Activated CD8-positive, alpha-beta T cell treated with anti-CD3 and anti-CD28 coated beads, Interleukin-2, amount 10 ng/mL, durations not matched to agents 7 days and 5 days (primary cell): ENCODE measurements at regions of chr17 and their contacts with region 1.

Region 1: DNA sequence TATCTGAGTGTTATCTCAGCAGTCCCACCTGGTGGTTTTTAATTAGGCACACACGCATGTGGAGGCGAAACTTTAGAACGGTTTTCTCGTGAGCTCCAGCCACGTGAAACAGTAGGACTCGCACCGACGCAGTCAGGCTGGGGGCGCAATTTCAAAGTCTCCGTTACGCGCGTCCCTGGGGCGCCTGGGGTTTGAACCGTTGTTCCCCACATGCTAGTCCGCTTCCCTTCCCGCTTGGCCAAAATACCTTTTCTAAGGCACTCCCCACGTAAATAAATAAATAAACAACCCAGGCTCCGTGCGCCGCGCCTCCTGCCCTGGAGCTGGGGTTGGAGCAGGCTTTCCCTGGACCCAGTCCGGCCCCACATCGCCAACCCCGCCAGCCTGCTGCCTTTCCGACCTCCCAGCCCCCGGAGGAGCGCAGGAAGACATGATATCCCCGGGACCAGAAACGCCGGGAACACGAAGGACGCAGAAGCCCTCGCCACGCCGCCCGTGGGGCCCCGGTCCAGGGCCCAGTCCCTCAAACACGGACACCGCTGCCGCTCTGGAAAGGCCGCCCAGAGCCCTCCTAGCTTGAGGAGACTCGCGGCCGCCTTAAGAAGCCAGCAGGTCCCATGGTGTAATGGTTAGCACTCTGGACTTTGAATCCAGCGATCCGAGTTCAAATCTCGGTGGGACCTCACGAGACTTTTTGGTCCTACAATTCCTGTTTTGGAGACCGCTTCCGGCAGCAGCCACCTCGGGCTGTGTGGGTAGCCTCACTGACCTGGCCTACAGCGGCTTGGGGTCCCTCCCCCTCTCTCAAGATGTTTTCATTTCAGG is 18.2 kb downstream of the GNGT2 start:
- DNase-seq: peak; percentile 92
- ATAC-seq: peak; percentile 62
- H3K4me3 Mint-ChIP-seq: peak overlapping the region; percentile 83
- H3K27ac Mint-ChIP-seq: peak overlapping the region; percentile 94
- H3K4me1 Mint-ChIP-seq: peaks cover 55% of the 10 kb centered on the region
- H3K27me3 Mint-ChIP-seq: no peaks in the 10 kb centered on the region

Region 2: DNA sequence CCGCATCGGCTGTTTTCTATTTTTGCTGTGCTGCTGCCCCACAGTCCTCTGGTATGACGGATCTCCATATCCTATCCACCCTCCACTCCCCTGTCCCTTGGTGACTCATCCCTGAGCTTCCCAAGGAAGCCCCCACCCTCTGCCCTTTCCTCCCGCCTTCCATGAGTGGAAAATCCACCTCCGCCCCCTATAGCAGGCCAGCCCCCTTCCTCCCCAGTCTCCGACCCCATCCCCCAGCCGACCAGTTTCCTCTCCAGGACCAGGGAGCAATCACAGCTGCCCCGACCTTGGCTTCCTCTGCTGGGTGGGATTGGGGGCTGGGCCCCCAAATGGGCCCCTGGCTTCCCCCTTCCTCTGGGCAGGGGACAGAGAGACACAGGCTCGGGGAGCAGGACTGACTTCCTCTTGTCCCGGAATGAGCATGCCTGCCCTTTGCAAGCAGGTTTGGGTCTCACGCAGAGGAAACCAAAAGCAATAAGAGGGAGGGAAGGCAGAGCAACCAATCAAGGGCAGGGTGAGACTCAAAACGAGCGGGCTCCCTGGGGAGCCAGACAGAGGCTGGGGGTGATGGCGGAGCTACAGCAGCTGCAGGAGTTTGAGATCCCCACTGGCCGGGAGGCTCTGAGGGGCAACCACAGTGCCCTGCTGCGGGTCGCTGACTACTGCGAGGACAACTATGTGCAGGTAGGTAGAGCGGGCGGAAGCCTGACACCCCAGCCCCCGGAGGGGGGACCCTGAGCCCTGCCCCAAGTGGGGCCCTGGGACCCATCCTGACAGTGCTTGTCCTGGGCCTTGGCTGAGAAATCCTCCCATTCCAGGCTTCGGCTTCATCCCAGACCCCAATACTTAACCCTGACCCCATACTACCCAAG is 18.3 kb after region 1 on chr17 and contains the starts of genes ABI3 and GNGT2:
- CTCF ChIA-PET with region 1: interaction called, 30 read pairs
- POLR2A ChIA-PET with region 1: interaction called, 69 read pairs
- DNase-seq: peak; percentile 84
- ATAC-seq: peak; percentile 83
- H3K4me3 Mint-ChIP-seq: peak within 1 kb of the TSS; percentile 96
- H3K27ac Mint-ChIP-seq: peak within 1 kb of the TSS; percentile 89
- H3K4me1 Mint-ChIP-seq: peaks cover 62% of the 10 kb centered on the region
- H3K27me3 Mint-ChIP-seq: no peaks in the 10 kb centered on the region
- total RNA-seq, gene ABI3: 110 to 117 TPM
- total RNA-seq, gene GNGT2: 40.0 to 45.4 TPM

Region 3: GRCh38 chr17:49217651-49218413 is 25.7 kb after region 1 on chr17:
- CTCF ChIA-PET with region 1: interaction called, 30 read pairs
- POLR2A ChIA-PET with region 1: interaction called, 69 read pairs
- DNase-seq: peak; percentile 90
- ATAC-seq: peak; percentile 77
- H3K4me3 Mint-ChIP-seq: peak overlapping the region; percentile 77
- H3K27ac Mint-ChIP-seq: peak overlapping the region; percentile 98
- H3K4me1 Mint-ChIP-seq: peaks cover 82% of the 10 kb centered on the region
- H3K27me3 Mint-ChIP-seq: no peaks in the 10 kb centered on the region

Region 4: GRCh38 chr17:49223517-49224197 is 31.5 kb after region 1 on chr17:
- CTCF ChIA-PET with region 1: interaction called, 92 read pairs
- POLR2A ChIA-PET with region 1: interaction called, 39 read pairs
- DNase-seq: peak; percentile 78
- ATAC-seq: no peak
- H3K4me3 Mint-ChIP-seq: peak overlapping the region; percentile 53
- H3K27ac Mint-ChIP-seq: peak overlapping the region; percentile 83
- H3K4me1 Mint-ChIP-seq: peaks cover 73% of the 10 kb centered on the region
- H3K27me3 Mint-ChIP-seq: no peaks in the 10 kb centered on the region

Region 5: GRCh38 chr17:49230636-49231562 is 38.8 kb after region 1 on chr17 and contains the start of gene PHOSPHO1:
- CTCF ChIA-PET with region 1: interaction called, 92 read pairs
- POLR2A ChIA-PET with region 1: interaction called, 39 read pairs
- DNase-seq: peak; percentile 91
- ATAC-seq: peak; percentile 88
- H3K4me3 Mint-ChIP-seq: peak within 1 kb of the TSS; percentile 79
- H3K27ac Mint-ChIP-seq: peak within 1 kb of the TSS; percentile 75
- H3K4me1 Mint-ChIP-seq: peaks cover 40% of the 10 kb centered on the region
- H3K27me3 Mint-ChIP-seq: peaks cover 19% of the 10 kb centered on the region
- total RNA-seq, gene PHOSPHO1: not detected